CD4-positive, alpha-beta T cell (primary cell): ENCODE measurements at regions of chr4 and their contacts with region 1.

Region 1: DNA sequence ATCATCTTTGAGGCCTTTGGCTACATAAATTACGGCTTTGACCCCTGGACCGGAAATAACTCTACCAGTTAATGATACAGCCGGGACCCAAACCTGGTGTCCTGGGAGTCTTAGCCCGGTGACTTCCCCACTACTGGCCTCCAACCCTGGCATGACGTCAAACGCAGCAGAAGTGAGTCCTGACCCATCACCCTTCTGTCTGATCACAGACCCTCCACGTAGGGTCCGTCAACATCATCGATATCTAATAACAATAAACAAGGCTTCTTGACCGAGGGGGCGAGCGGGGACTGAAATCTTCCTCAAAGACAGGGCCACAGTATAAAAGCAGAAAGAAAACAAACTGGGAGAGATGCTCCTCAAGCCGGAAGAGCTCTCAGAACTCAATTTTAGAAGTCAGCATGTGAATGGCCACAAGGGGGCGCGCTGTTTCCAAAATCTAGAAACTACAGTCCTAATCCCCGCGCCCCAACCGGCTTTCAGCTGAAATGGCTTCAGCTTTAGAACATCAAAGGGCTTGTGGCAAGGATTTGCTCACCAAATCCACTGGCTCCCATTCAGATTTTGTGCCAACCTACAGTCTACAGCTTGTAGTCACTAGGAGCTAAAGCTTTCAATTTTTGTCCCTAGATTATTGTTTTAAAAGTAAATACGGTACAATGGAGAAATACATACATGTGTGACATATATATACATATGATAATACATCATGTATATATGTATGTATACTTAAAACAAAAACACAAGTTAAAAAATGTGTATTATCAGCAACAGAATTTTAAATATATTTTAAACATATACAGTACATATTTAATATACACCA is 46.4 kb upstream of the ENPP6 start:
- DNase-seq: peak; percentile 87 to 99 (median 94)
- ATAC-seq: peak; percentile 84
- H3K4me3 ChIP-seq: no peak overlapping the region
- H3K4me3 Mint-ChIP-seq: peak overlapping the region; percentile 30
- H3K27ac ChIP-seq: no peak overlapping the region
- H3K27ac Mint-ChIP-seq: no peak overlapping the region
- H3K4me1 ChIP-seq: peaks cover 27% of the 10 kb centered on the region
- H3K4me1 Mint-ChIP-seq: peaks cover 36% of the 10 kb centered on the region
- H3K27me3 ChIP-seq: no peaks in the 10 kb centered on the region
- H3K27me3 Mint-ChIP-seq: no peaks in the 10 kb centered on the region
- CTCF ChIP-seq: peak; percentile 85

Region 2: GRCh38 chr4:184250795-184251669 is 13.1 kb before region 1 on chr4:
- CTCF ChIA-PET with region 1: interaction called, 11 read pairs
- POLR2A ChIA-PET with region 1: no interaction called
- intact Hi-C with region 1: no loop called
- DNase-seq: peak in 4 of 14 experiments; percentile 28 to 79 (median 68)
- ATAC-seq: peak; percentile 82
- H3K4me3 ChIP-seq: no peak overlapping the region
- H3K4me3 Mint-ChIP-seq: no peak overlapping the region
- H3K27ac ChIP-seq: no peak overlapping the region
- H3K27ac Mint-ChIP-seq: no peak overlapping the region
- H3K4me1 ChIP-seq: peaks cover 6% of the 10 kb centered on the region
- H3K4me1 Mint-ChIP-seq: no peaks in the 10 kb centered on the region
- H3K27me3 ChIP-seq: no peaks in the 10 kb centered on the region
- H3K27me3 Mint-ChIP-seq: no peaks in the 10 kb centered on the region
- CTCF ChIP-seq: peak; percentile 76

Region 3: DNA sequence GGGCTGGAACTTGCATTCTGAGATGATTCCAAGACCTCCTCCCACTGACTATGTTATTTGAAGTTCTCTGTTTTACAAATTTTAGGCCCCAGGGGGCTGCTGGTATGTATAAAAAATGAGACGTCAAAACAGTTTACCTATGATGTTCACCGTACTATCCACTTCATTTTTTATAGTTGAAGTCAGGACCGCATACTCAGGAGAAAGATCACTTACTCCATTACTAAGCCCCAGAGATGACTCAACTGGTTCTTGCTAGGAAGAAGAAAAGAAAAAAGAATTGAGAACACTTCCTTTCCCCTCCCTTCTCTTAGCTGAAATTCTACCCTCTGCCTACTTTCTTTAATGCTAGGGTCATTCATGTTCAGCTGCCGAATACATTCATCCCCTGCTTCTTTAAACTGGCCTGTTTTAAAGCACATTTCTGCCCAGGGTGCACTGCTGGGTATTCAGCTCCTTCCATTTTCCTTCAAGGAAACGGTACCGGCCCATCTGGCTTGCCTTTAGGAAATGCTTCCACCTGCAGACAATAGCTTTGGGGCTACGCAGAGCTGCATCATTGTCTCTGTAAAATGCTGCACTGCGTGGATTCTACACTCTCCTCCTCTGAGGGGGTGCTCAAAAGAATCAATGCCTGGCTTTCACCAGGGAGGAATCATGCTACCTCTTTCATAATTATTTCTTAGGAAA is 144.0 kb after region 1 on chr4:
- CTCF ChIA-PET with region 1: interaction called, 10 read pairs
- POLR2A ChIA-PET with region 1: no interaction called
- intact Hi-C with region 1: loop called in 1 of 2 experiments (anchors 10 kb)
- DNase-seq: no peak
- ATAC-seq: no peak
- H3K4me3 ChIP-seq: no peak overlapping the region
- H3K4me3 Mint-ChIP-seq: no peak overlapping the region
- H3K27ac ChIP-seq: peak overlapping the region in 1 of 2 donors; percentile 26
- H3K27ac Mint-ChIP-seq: no peak overlapping the region
- H3K4me1 ChIP-seq: peaks cover 30% of the 10 kb centered on the region
- H3K4me1 Mint-ChIP-seq: peaks cover 45% of the 10 kb centered on the region
- H3K27me3 ChIP-seq: no peaks in the 10 kb centered on the region
- H3K27me3 Mint-ChIP-seq: no peaks in the 10 kb centered on the region
- CTCF ChIP-seq: no peak

Region 4: GRCh38 chr4:184538023-184538599 is 274.0 kb after region 1 on chr4:
- CTCF ChIA-PET with region 1: interaction called, 24 read pairs
- POLR2A ChIA-PET with region 1: interaction called, 33 read pairs
- intact Hi-C with region 1: loop called (anchors 1 kb)
- DNase-seq: peak; percentile 41 to 87 (median 58)
- ATAC-seq: peak; percentile 41
- H3K4me3 ChIP-seq: peak overlapping the region; percentile 82
- H3K4me3 Mint-ChIP-seq: peak overlapping the region; percentile 96
- H3K27ac ChIP-seq: peak overlapping the region; percentile 87 to 96
- H3K27ac Mint-ChIP-seq: peak overlapping the region; percentile 99
- H3K4me1 ChIP-seq: peaks cover 29% of the 10 kb centered on the region
- H3K4me1 Mint-ChIP-seq: peaks cover 50% of the 10 kb centered on the region
- H3K27me3 ChIP-seq: no peaks in the 10 kb centered on the region
- H3K27me3 Mint-ChIP-seq: no peaks in the 10 kb centered on the region
- CTCF ChIP-seq: peak; percentile 63

Region 5: GRCh38 chr4:184825896-184826690 is 562.0 kb after region 1 on chr4 and contains the start of gene ACSL1:
- CTCF ChIA-PET with region 1: no interaction called
- POLR2A ChIA-PET with region 1: no interaction called
- intact Hi-C with region 1: loop called in 1 of 2 experiments (anchors 5 kb)
- DNase-seq: peak; percentile 58 to 90 (median 72)
- ATAC-seq: peak; percentile 85
- H3K4me3 ChIP-seq: peak within 1 kb of the TSS; percentile 59
- H3K4me3 Mint-ChIP-seq: peak within 1 kb of the TSS; percentile 97
- H3K27ac ChIP-seq: peak within 1 kb of the TSS in 1 of 2 donors; percentile 31
- H3K27ac Mint-ChIP-seq: peak within 1 kb of the TSS; percentile 92
- H3K4me1 ChIP-seq: peaks cover 23% of the 10 kb centered on the region
- H3K4me1 Mint-ChIP-seq: peaks cover 40% of the 10 kb centered on the region
- H3K27me3 ChIP-seq: no peaks in the 10 kb centered on the region
- H3K27me3 Mint-ChIP-seq: no peaks in the 10 kb centered on the region
- CTCF ChIP-seq: no peak
- total RNA-seq, gene ACSL1: 12.4 to 12.5 TPM

Region 6: DNA sequence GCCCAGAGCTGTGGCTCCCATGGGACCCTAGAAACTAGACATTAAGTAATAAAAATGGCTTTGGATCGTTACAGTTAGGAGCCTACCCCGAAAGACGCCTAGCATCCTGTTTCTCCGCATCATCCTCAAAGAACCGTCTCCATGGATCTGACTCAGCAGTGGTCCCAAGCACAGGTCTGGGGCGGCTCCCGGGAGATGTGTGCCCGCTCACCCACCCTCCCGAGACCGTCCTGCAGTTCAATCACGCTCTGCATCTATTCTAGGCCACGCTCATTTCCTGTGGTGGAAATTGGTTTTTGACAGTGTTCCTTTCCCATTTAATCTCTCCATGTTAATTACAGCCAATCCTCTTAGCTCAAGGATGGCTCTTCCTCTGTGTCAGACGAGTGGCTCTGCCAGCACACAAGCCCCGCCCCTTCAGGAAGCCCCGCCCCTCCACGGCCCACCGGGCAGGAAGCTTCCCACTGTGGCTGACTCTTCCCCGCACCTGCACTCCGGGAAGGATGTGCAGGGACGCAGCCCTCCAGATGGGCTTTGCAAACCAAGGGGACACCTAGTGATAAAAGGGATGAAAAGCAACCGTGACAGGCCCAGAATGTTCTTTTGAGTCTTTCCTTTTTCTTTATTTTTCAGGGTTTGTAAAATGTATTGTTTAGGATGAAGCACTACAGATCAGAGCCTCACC is 719.7 kb after region 1 on chr4:
- CTCF ChIA-PET with region 1: no interaction called
- POLR2A ChIA-PET with region 1: no interaction called
- intact Hi-C with region 1: loop called in 1 of 2 experiments (anchors 10 kb)
- DNase-seq: peak in 13 of 14 experiments; percentile 17 to 79 (median 56)
- ATAC-seq: peak; percentile 74
- H3K4me3 ChIP-seq: peak overlapping the region; percentile 43
- H3K4me3 Mint-ChIP-seq: no peak overlapping the region
- H3K27ac ChIP-seq: no peak overlapping the region
- H3K27ac Mint-ChIP-seq: no peak overlapping the region
- H3K4me1 ChIP-seq: peaks cover 22% of the 10 kb centered on the region
- H3K4me1 Mint-ChIP-seq: no peaks in the 10 kb centered on the region
- H3K27me3 ChIP-seq: no peaks in the 10 kb centered on the region
- H3K27me3 Mint-ChIP-seq: peaks cover 3% of the 10 kb centered on the region
- CTCF ChIP-seq: no peak

Region 7: DNA sequence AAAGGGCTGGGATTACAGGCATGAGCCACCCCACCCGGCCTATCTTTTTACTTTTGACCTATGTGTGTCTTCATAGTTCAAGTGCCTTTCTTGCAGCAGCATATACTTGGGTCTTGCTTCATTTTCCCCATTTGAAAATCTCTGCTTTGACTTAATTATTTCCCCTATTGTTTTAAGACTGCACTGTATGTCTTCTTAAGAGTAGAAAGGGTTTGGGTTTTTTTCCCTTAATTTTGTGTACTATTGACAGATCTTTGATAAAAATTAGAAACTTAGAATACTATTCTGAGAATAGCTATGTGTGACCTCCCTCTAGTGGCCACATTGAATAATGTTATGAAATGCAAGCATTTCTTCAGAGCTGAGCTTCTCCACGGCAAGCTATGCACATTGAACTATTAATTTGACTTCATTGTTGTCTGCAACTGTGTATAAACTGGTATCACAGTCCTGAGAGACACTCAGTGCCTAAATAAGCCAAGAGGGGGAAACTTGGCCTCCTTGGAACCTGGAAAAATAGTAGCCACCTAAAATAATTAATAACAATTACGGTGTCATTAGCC is 870.3 kb after region 1 on chr4:
- CTCF ChIA-PET with region 1: no interaction called
- POLR2A ChIA-PET with region 1: no interaction called
- intact Hi-C with region 1: loop called in 1 of 2 experiments (anchors 10 kb)
- DNase-seq: peak in 3 of 14 experiments; percentile 55 to 71 (median 66)
- ATAC-seq: peak; percentile 66
- H3K4me3 ChIP-seq: no peak overlapping the region
- H3K4me3 Mint-ChIP-seq: no peak overlapping the region
- H3K27ac ChIP-seq: no peak overlapping the region
- H3K27ac Mint-ChIP-seq: no peak overlapping the region
- H3K4me1 ChIP-seq: no peaks in the 10 kb centered on the region
- H3K4me1 Mint-ChIP-seq: no peaks in the 10 kb centered on the region
- H3K27me3 ChIP-seq: peaks cover 6 to 7% of the 10 kb centered on the region in 2 experiments
- H3K27me3 Mint-ChIP-seq: peaks cover 62% of the 10 kb centered on the region
- CTCF ChIP-seq: peak; percentile 87